Left ventricle myocardium superior (tissue), 1 donor: ENCODE measurements at regions of chr11 and their contacts with region 1.

Region 1: GRCh38 chr11:27468209-27468994 is 4.2 kb downstream of the LGR4 start:
- DNase-seq: no peak
- ATAC-seq: peak; percentile 4

Region 2: GRCh38 chr11:27370374-27370773 is 98.0 kb before region 1 on chr11:
- intact Hi-C with region 1: loop called (anchors 10 kb)
- DNase-seq: no peak
- ATAC-seq: no peak

Region 3: DNA sequence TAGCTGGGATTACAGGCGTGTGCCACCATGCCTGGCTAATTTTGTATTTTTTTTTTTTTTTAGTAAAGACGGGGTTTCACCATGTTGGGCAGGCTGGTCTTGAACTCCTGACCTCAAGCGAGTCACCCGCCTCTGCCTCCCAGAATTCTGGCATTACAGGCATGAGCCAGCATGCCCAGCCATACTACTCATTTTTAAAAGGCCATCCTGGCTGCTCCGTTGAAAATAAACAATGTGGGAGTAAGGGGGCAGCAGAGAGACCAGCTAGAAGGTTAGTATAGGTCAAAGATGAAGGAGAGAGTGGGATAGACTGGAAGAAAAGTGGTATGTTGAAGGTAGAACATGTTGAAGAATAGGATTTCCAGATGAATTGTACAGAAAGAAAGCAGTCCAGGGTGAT is 55.8 kb after region 1 on chr11:
- intact Hi-C with region 1: no loop called
- DNase-seq: no peak
- ATAC-seq: no peak